ENCODE measurements at regions of chr1 and their contacts with region 1.

Region 1: DNA sequence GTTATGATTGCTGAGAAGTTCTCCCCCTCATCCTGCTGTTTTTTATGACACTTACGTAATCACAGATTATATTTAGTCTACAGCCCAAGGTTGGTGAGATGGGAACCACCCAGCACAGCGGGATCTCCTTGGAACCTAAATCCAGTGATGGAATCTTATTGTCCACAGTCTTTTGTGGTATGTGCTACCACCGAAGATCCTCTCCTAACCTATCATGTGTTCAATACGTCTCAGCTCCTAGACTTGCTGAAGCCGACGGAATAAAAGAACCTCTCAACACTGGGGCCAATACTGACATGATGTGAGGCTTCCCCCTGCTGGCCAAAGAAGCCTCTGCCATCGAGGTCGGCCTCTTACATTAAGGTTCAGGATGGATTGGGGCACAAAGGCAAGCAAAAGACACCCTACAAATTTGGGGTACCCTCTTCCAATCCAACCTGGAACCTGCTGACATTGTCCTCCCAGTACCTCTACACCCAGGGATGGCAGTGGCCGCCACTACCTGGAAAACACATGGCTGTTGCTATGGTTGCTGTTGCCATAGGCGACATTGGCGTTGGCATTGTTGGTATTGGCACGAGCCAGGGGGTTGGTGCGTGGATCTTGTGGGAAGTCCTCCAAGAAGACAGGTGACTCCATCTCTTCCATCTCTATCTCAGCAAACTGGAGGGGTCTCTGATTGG is 19.4 kb upstream of the KIF21B start:
- DNase-seq: peak; percentile 80
- ATAC-seq: peak; percentile 94
- H3K4me3 Mint-ChIP-seq: no peak overlapping the region
- H3K27ac Mint-ChIP-seq: no peak overlapping the region
- H3K4me1 Mint-ChIP-seq: peaks cover 4% of the 10 kb centered on the region
- H3K27me3 Mint-ChIP-seq: peaks cover 12% of the 10 kb centered on the region

Region 2: DNA sequence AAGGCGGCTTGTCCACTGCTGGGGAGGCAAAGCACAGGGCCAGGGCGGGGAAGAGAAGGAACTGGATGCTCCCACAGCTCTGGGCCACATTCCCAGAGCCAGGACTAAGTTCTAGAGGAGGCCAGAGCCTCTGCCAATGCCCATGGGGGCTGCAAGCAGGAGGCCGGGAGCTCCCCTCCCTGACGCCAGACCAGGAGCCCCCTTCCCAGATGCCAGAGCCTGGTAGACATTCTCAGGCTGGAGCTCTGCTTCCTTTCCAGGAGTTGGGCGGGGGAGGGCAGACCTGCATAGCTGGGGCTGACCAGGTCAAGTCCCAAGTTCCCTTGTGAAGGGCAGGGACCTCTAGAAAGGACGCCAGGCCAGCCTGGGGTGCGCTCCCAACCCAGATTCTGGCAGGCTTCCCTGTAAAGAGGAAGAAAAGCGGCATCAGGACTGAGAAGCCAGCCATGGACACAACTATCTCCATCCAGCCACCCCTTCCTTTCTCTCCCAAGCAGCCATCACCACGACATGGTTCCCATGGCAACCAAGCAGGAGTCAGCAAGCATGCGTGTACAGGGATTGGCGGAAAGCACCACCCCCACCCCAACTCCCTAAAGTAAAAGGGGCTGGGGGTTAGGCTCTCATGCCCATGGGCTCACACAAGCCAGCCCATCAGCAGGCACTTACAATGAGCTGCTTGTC is 32.8 kb before region 1 on chr1:
- CTCF ChIA-PET with region 1: interaction called, 14 read pairs
- DNase-seq: no peak
- ATAC-seq: no peak
- H3K4me3 Mint-ChIP-seq: no peak overlapping the region
- H3K27ac Mint-ChIP-seq: peak overlapping the region; percentile 50
- H3K4me1 Mint-ChIP-seq: peaks cover 62% of the 10 kb centered on the region
- H3K27me3 Mint-ChIP-seq: no peaks in the 10 kb centered on the region

Region 3: DNA sequence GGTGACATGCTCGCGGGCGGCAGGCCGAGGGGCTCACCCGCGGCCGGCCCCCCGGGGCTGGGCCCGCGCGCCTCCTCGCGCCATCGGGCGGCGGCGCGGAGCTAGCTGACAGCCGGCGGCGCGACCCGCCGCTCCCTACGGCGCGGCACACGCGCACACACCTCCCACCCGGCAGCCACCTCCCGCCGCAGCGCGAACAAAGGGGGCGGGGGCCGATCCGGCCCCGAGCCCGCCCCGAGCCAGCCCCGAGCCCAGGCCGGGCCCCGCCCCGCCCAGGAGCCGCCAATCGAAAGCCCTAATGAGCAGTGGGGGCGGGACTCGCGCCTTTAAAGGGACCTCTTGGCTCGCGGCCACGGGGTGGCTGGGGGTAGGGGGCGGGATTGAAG is 19.4 kb before region 1 on chr1 and contains the start of gene KIF21B:
- CTCF ChIA-PET with region 1: interaction called, 146 read pairs
- DNase-seq: peak; percentile 93
- ATAC-seq: peak; percentile 78
- H3K4me3 Mint-ChIP-seq: peak within 1 kb of the TSS; percentile 91
- H3K27ac Mint-ChIP-seq: peak within 1 kb of the TSS; percentile 99
- H3K4me1 Mint-ChIP-seq: peaks cover 72% of the 10 kb centered on the region
- H3K27me3 Mint-ChIP-seq: no peaks in the 10 kb centered on the region
- total RNA-seq, gene KIF21B: 102 to 155 TPM

Measured in activated CD8-positive, alpha-beta memory T cell treated with anti-CD3 and anti-CD28 coated beads, Interleukin-2, amount 10 ng/mL, durations not matched to agents 7 days and 5 days (primary cell).